Panc1 (cell line): ENCODE measurements at regions of chr3 and their contacts with region 1.

Region 1: GRCh38 chr3:141056491-141057171 is 5.5 kb downstream of the SPSB4 start:
- DNase-seq: no peak
- ATAC-seq: no peak
- H3K4me3 ChIP-seq: no peak overlapping the region
- H3K27ac ChIP-seq: no peak overlapping the region
- H3K4me1 ChIP-seq: peaks cover 6% of the 10 kb centered on the region; the same call in 1 of the 2 replicates
- H3K27me3 ChIP-seq: peaks cover 23% of the 10 kb centered on the region
- CTCF ChIP-seq: no peak

Region 2: DNA sequence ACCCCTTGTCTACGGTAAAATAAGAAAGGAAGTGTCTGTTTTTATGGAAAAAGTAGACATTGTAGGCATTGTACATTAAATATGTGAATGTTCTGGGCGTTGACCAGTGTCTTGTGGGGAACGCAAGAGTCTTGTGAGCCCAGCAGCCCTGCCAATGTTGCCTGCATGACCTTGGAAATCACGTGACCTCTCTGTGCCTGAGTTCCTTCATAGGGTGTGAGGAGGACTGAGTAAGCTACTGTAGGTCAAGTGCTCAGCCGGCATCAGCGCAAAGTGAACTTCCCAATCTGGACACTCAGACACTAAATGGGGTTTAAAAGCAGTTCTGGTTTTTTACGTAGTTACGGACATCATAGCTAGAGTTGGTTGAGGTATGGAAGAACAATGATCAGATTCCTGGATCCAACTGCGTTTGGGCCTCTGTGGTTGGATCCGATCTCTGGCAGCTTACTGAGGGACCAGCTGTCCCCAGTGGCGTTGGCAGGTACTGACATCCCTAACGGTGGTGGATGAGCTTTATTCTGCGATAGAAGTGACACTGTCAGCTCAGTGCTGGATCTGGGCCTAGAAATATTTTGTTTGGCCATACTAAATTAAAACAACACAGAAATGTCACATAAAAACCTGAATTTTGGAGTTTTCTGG is 58.3 kb after region 1 on chr3:
- CTCF ChIA-PET with region 1: no interaction called
- POLR2A ChIA-PET with region 1: interaction called, 11 read pairs
- in situ Hi-C with region 1: no loop called
- intact Hi-C with region 1: no loop called
- DNase-seq: no peak
- ATAC-seq: peak; percentile 83; the same call in 1 of the 2 replicates
- H3K4me3 ChIP-seq: no peak overlapping the region
- H3K27ac ChIP-seq: no peak overlapping the region
- H3K4me1 ChIP-seq: no peaks in the 10 kb centered on the region
- H3K27me3 ChIP-seq: no peaks in the 10 kb centered on the region
- CTCF ChIP-seq: peak; percentile 70

Region 3: DNA sequence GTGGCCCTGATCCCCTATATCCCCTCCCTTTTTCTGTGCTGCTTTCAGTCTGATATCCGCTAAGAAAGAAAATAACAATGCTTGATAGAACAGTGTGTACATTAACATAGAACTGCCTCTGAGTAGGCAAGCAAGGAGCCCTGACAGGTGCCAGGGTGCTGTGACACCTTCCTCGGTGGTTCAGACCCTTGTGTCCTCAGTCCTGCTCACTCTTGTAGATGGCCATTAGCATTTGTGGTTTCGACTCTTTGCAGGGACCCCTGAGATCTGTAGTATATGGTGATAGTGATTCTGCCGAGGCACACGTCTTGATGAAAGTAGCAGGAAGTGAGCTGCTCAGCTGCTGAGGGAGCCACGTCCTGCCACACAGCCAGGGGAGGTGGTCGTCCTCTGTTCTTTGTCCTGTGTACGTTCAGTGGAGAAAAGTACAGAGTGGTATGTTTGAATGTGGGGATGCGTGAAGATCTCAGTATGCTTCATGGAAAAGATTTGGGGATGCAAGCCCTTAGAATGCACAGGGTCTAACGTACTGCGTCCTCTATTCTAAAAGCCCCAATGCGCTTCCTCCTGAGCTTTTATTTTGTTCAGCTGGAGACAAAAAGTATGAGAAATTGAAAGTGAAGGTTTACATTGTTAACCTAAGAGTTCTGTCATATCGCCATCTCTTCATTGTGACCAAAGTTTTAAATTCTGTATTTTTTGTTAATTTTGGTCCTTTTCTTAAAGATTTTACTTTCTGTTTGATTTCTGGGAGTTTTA is 210.3 kb after region 1 on chr3:
- CTCF ChIA-PET with region 1: no interaction called
- POLR2A ChIA-PET with region 1: interaction called, 10 read pairs
- in situ Hi-C with region 1: no loop called
- intact Hi-C with region 1: no loop called
- DNase-seq: no peak
- ATAC-seq: 0 out of 2 replicates have a peak, but pooled peaks have one; percentile 39
- H3K4me3 ChIP-seq: no peak overlapping the region
- H3K27ac ChIP-seq: no peak overlapping the region
- H3K4me1 ChIP-seq: no peaks in the 10 kb centered on the region
- H3K27me3 ChIP-seq: peaks cover 2% of the 10 kb centered on the region; the same call in 1 of the 2 replicates
- CTCF ChIP-seq: no peak